H1 (cell line): ENCODE measurements at regions of chr5 and their contacts with region 1.

Region 1: GRCh38 chr5:139765409-139766217 is 30.0 kb upstream of the PSD2 start:
- DNase-seq: peak in 1 of 2 experiments; percentile 97
- H3K4me3 ChIP-seq: peak overlapping the region; percentile 15 to 73 (median 66); a peak in 7 of 8 replicates
- H3K27ac ChIP-seq: no peak overlapping the region
- H3K4me1 ChIP-seq: peaks cover 9 to 32% (median 15%) of the 10 kb centered on the region in 4 experiments
- H3K27me3 ChIP-seq: peaks cover 8 to 36% (median 26%) of the 10 kb centered on the region in 4 experiments
- CTCF ChIP-seq: peak in 2 of 3 experiments; percentile 65 to 75; a peak in 3 of 4 replicates
- EP300 ChIP-seq: no peak
- POLR2A ChIP-seq: no peak
- RAD21 ChIP-seq: peak; percentile 66 to 71

Region 2: DNA sequence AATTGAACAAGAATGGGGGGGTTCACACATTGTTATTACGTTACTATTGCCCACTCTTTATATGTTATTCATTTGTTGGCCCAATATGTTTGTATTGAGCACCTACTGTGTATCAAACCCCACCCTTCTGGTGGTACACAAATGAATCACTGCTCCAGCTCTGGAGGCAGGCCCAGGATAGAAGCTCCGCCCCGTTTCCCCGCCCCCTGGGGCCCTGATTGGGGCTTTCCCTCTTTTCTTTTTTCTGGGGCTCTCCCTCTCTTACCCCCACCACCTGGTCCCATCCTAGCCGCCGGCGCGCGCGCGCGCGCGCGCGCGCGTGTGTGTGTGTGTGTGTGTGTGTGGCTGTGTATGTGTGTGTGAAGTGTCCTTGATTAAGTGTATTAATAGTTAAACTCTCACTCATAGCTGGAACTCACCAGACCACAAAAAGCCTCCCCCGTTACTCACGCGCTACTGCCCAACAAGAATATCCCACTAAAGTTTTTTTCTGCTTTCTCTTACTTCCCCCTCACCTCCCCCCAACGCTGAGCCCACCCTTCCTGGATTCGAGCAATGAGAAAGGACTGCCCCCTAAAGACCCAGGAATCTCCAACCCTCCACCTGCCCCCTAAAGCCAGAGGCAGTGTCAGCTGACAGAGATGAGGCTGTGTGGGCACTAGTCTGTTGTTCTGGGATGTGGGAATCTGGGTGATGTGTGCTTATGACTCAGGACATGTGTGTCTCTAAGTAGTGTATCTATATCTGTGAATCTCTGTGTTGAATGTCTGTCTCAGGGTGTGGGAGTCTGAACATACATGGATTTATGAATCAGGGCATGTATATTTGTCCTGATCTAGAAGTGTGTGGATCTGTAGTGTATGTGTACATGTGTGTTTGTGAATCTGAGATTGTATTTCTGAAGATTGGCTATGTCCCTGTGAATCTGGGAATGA is 113.5 kb before region 1 on chr5:
- CTCF ChIA-PET with region 1: interaction called, 10 read pairs
- POLR2A ChIA-PET with region 1: interaction called, 4 read pairs
- DNase-seq: peak in 1 of 2 experiments; percentile 90
- H3K4me3 ChIP-seq: peak overlapping the region in 3 of 4 experiments; percentile 2 to 90 (median 14); a peak in 5 of 8 replicates
- H3K27ac ChIP-seq: no peak overlapping the region
- H3K4me1 ChIP-seq: peaks cover 20 to 53% (median 50%) of the 10 kb centered on the region in 4 experiments
- H3K27me3 ChIP-seq: peaks cover 0 to 4% (median 0%) of the 10 kb centered on the region in 4 experiments; a peak in 2 of 7 replicates
- CTCF ChIP-seq: no peak
- EP300 ChIP-seq: no peak
- POLR2A ChIP-seq: no peak
- RAD21 ChIP-seq: no peak

Region 3: GRCh38 chr5:139678751-139679750 is 86.6 kb before region 1 on chr5:
- CTCF ChIA-PET with region 1: interaction called, 22 read pairs
- POLR2A ChIA-PET with region 1: no interaction called
- DNase-seq: no peak
- H3K4me3 ChIP-seq: no peak overlapping the region
- H3K27ac ChIP-seq: no peak overlapping the region
- H3K4me1 ChIP-seq: peaks cover 8 to 43% (median 26%) of the 10 kb centered on the region in 4 experiments
- H3K27me3 ChIP-seq: no peaks in the 10 kb centered on the region
- CTCF ChIP-seq: no peak
- EP300 ChIP-seq: no peak
- POLR2A ChIP-seq: no peak
- RAD21 ChIP-seq: no peak

Region 4: DNA sequence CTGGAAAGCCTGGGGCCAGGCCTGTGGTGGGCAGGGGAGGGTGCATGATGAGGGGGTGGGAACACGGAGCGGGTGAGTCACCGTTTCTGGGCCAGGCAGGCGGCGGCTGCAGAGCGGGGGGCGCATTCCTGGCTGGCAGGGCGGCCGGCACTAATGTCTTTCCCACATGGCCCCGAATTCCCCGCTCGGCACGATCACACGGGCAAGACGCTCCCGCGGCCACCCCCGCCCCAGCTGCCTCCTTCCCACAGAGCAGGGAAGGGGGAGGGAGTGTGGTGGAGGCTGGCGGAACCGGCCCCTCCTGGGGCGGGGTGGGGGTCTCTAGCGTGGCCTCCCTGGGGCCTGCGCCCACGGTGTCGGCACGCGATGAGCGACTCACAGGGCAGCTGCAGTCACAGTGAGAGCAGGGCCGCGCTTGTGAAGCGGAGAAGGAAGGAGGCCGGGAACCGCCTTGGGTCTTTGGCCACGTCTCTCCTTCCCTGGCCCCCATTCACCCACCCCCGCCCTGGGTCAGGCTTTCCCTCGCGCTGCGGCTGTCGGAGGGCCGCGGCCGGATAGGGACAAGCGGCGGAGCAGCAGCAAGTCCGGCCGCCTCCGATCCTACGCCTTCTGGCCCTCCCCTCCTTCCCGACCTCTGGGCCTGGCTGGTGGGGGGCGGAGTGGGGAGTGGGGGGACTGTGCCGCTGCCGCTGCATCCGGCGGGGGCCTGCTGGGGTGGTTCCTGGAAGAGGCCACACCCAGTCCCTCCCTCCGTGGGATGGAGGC is 68.5 kb before region 1 on chr5:
- CTCF ChIA-PET with region 1: interaction called, 34 read pairs
- POLR2A ChIA-PET with region 1: interaction called, 3 read pairs
- DNase-seq: no peak
- H3K4me3 ChIP-seq: peak overlapping the region; percentile 28 to 58 (median 34); a peak in 7 of 8 replicates
- H3K27ac ChIP-seq: 0 out of 2 replicates have a peak overlapping the region, but pooled peaks have one; percentile 20
- H3K4me1 ChIP-seq: peaks cover 24 to 51% (median 38%) of the 10 kb centered on the region in 4 experiments
- H3K27me3 ChIP-seq: peaks cover 0 to 4% (median under 1%) of the 10 kb centered on the region in 4 experiments; a peak in 4 of 7 replicates
- CTCF ChIP-seq: no peak
- EP300 ChIP-seq: no peak
- POLR2A ChIP-seq: peak in 1 of 2 experiments; percentile 51; a peak in 1 of 3 replicates
- RAD21 ChIP-seq: no peak

Region 5: GRCh38 chr5:139740138-139740991 is 25.2 kb before region 1 on chr5:
- CTCF ChIA-PET with region 1: interaction called, 81 read pairs
- POLR2A ChIA-PET with region 1: interaction called, 11 read pairs
- DNase-seq: no peak
- H3K4me3 ChIP-seq: no peak overlapping the region
- H3K27ac ChIP-seq: no peak overlapping the region
- H3K4me1 ChIP-seq: peaks cover 0 to 32% (median 22%) of the 10 kb centered on the region in 4 experiments; a peak in 6 of 7 replicates
- H3K27me3 ChIP-seq: peaks cover 0 to 7% (median 3%) of the 10 kb centered on the region in 4 experiments; a peak in 4 of 7 replicates
- CTCF ChIP-seq: no peak
- EP300 ChIP-seq: no peak
- POLR2A ChIP-seq: no peak
- RAD21 ChIP-seq: no peak

Region 6: GRCh38 chr5:139795074-139796001 is 29.7 kb after region 1 on chr5 and contains the start of gene PSD2:
- CTCF ChIA-PET with region 1: interaction called, 16 read pairs
- POLR2A ChIA-PET with region 1: no interaction called
- DNase-seq: peak in 1 of 2 experiments; percentile 73
- H3K4me3 ChIP-seq: peak within 1 kb of the TSS; percentile 35 to 81 (median 50)
- H3K27ac ChIP-seq: no peak within 1 kb of the TSS
- H3K4me1 ChIP-seq: peaks cover 2 to 7% (median 2%) of the 10 kb centered on the region in 4 experiments; a peak in 3 of 7 replicates
- H3K27me3 ChIP-seq: peaks cover 41 to 74% (median 61%) of the 10 kb centered on the region in 4 experiments
- CTCF ChIP-seq: no peak
- EP300 ChIP-seq: no peak
- POLR2A ChIP-seq: no peak
- RAD21 ChIP-seq: no peak
- total RNA-seq, gene PSD2: 0.06 and 0.13 TPM in 2 replicates